ENCODE measurements at regions of chr1 and their contacts with region 1.

Region 1: GRCh38 chr1:107196973-107197562 is 56.2 kb downstream of the NTNG1 start:
- DNase-seq: peak in 1 of 2 experiments; percentile 62
- H3K4me3 ChIP-seq: no peak overlapping the region
- H3K27ac ChIP-seq: no peak overlapping the region
- H3K4me1 ChIP-seq: peaks cover 0 to 12% (median 7%) of the 10 kb centered on the region in 4 experiments; a peak in 6 of 7 replicates
- H3K27me3 ChIP-seq: no peaks in the 10 kb centered on the region
- CTCF ChIP-seq: peak in 2 of 3 experiments; percentile 44 to 75; a peak in 3 of 4 replicates
- EP300 ChIP-seq: no peak
- POLR2A ChIP-seq: no peak
- RAD21 ChIP-seq: peak; percentile 54 to 63

Region 2: GRCh38 chr1:107124694-107125093 is 72.4 kb before region 1 on chr1:
- CTCF ChIA-PET with region 1: no interaction called
- POLR2A ChIA-PET with region 1: no interaction called
- DNase-seq: no peak
- H3K4me3 ChIP-seq: no peak overlapping the region
- H3K27ac ChIP-seq: no peak overlapping the region
- H3K4me1 ChIP-seq: no peaks in the 10 kb centered on the region
- H3K27me3 ChIP-seq: no peaks in the 10 kb centered on the region
- CTCF ChIP-seq: no peak
- EP300 ChIP-seq: no peak
- POLR2A ChIP-seq: no peak
- RAD21 ChIP-seq: no peak

Region 3: GRCh38 chr1:107176763-107177162 is 20.3 kb before region 1 on chr1:
- CTCF ChIA-PET with region 1: interaction called, 19 read pairs
- POLR2A ChIA-PET with region 1: no interaction called
- DNase-seq: no peak
- H3K4me3 ChIP-seq: no peak overlapping the region
- H3K27ac ChIP-seq: no peak overlapping the region
- H3K4me1 ChIP-seq: peaks cover 0 to 5% (median 4%) of the 10 kb centered on the region in 4 experiments; a peak in 4 of 7 replicates
- H3K27me3 ChIP-seq: no peaks in the 10 kb centered on the region
- CTCF ChIP-seq: no peak
- EP300 ChIP-seq: no peak
- POLR2A ChIP-seq: no peak
- RAD21 ChIP-seq: no peak

Region 4: GRCh38 chr1:107183011-107183410 is 14.1 kb before region 1 on chr1:
- CTCF ChIA-PET with region 1: interaction called, 19 read pairs
- POLR2A ChIA-PET with region 1: interaction called, 3 read pairs
- DNase-seq: no peak
- H3K4me3 ChIP-seq: no peak overlapping the region
- H3K27ac ChIP-seq: no peak overlapping the region
- H3K4me1 ChIP-seq: peaks cover 0 to 7% (median 6%) of the 10 kb centered on the region in 4 experiments; a peak in 3 of 7 replicates
- H3K27me3 ChIP-seq: no peaks in the 10 kb centered on the region
- CTCF ChIP-seq: no peak
- EP300 ChIP-seq: no peak
- POLR2A ChIP-seq: no peak
- RAD21 ChIP-seq: no peak

Region 5: GRCh38 chr1:107213225-107213624 is 16.2 kb after region 1 on chr1:
- CTCF ChIA-PET with region 1: interaction called, 11 read pairs
- POLR2A ChIA-PET with region 1: no interaction called
- DNase-seq: no peak
- H3K4me3 ChIP-seq: no peak overlapping the region
- H3K27ac ChIP-seq: no peak overlapping the region
- H3K4me1 ChIP-seq: no peaks in the 10 kb centered on the region
- H3K27me3 ChIP-seq: no peaks in the 10 kb centered on the region
- CTCF ChIP-seq: no peak
- EP300 ChIP-seq: no peak
- POLR2A ChIP-seq: no peak
- RAD21 ChIP-seq: no peak

Region 6: GRCh38 chr1:107225706-107226105 is 28.6 kb after region 1 on chr1:
- CTCF ChIA-PET with region 1: interaction called, 13 read pairs
- POLR2A ChIA-PET with region 1: no interaction called
- DNase-seq: no peak
- H3K4me3 ChIP-seq: no peak overlapping the region
- H3K27ac ChIP-seq: no peak overlapping the region
- H3K4me1 ChIP-seq: peaks cover 3 to 10% (median 9%) of the 10 kb centered on the region in 4 experiments; a peak in 6 of 7 replicates
- H3K27me3 ChIP-seq: no peaks in the 10 kb centered on the region
- CTCF ChIP-seq: no peak
- EP300 ChIP-seq: no peak
- POLR2A ChIP-seq: no peak
- RAD21 ChIP-seq: no peak

Region 7: GRCh38 chr1:107483949-107484348 is 286.9 kb after region 1 on chr1:
- CTCF ChIA-PET with region 1: no interaction called
- POLR2A ChIA-PET with region 1: no interaction called
- DNase-seq: no peak
- H3K4me3 ChIP-seq: no peak overlapping the region
- H3K27ac ChIP-seq: no peak overlapping the region
- H3K4me1 ChIP-seq: peaks cover 0 to 3% (median 0%) of the 10 kb centered on the region in 4 experiments; a peak in 1 of 7 replicates
- H3K27me3 ChIP-seq: no peaks in the 10 kb centered on the region
- CTCF ChIP-seq: no peak
- EP300 ChIP-seq: no peak
- POLR2A ChIP-seq: no peak
- RAD21 ChIP-seq: no peak